Gastrocnemius medialis (tissue), 4 donors: ENCODE measurements at regions of chr19 and their contacts with region 1.

Region 1: GRCh38 chr19:29212648-29213573 is at the start of gene UQCRFS1:
- DNase-seq: peak; percentile 90 to 94
- ATAC-seq: peak; percentile 93 to 97
- H3K4me3 ChIP-seq: peak within 1 kb of the TSS; percentile 70 to 84 (median 70)
- H3K27ac ChIP-seq: peak within 1 kb of the TSS; percentile 88 to 94 (median 92)
- H3K4me1 ChIP-seq: peaks cover 29 to 31% of the 10 kb centered on the region in 2 donors
- H3K27me3 ChIP-seq: no peaks in the 10 kb centered on the region
- CTCF ChIP-seq: no peak
- POLR2A ChIP-seq: peak; percentile 96 to 97
- total RNA-seq, gene UQCRFS1: 78.1 to 142 (median 106) TPM

Region 2: GRCh38 chr19:27793644-27794493 is 1419.0 kb before region 1 on chr19:
- in situ Hi-C with region 1: no loop called
- intact Hi-C with region 1: loop called (anchors 5 kb)
- DNase-seq: peak; percentile 92 to 94
- ATAC-seq: peak; percentile 90 to 95
- H3K4me3 ChIP-seq: peak overlapping the region; percentile 72 to 96 (median 84)
- H3K27ac ChIP-seq: peak overlapping the region; percentile 87 to 97 (median 94)
- H3K4me1 ChIP-seq: peaks cover 28 to 31% of the 10 kb centered on the region in 2 donors
- H3K27me3 ChIP-seq: no peaks in the 10 kb centered on the region
- CTCF ChIP-seq: peak in 1 of 5 experiments; percentile 26
- POLR2A ChIP-seq: peak; percentile 77 to 79

Region 3: GRCh38 chr19:29247872-29248271 is 35.0 kb after region 1 on chr19:
- in situ Hi-C with region 1: no loop called
- intact Hi-C with region 1: loop called (anchors 5 kb)
- DNase-seq: peak in 1 of 2 donors; percentile 13
- ATAC-seq: peak; percentile 54 to 64
- H3K4me3 ChIP-seq: peak overlapping the region in 1 of 4 donors; percentile 13
- H3K27ac ChIP-seq: peak overlapping the region in 1 of 4 donors; percentile 37
- H3K4me1 ChIP-seq: peaks cover 10 to 21% of the 10 kb centered on the region in 2 donors
- H3K27me3 ChIP-seq: no peaks in the 10 kb centered on the region
- CTCF ChIP-seq: no peak
- POLR2A ChIP-seq: no peak

Region 4: DNA sequence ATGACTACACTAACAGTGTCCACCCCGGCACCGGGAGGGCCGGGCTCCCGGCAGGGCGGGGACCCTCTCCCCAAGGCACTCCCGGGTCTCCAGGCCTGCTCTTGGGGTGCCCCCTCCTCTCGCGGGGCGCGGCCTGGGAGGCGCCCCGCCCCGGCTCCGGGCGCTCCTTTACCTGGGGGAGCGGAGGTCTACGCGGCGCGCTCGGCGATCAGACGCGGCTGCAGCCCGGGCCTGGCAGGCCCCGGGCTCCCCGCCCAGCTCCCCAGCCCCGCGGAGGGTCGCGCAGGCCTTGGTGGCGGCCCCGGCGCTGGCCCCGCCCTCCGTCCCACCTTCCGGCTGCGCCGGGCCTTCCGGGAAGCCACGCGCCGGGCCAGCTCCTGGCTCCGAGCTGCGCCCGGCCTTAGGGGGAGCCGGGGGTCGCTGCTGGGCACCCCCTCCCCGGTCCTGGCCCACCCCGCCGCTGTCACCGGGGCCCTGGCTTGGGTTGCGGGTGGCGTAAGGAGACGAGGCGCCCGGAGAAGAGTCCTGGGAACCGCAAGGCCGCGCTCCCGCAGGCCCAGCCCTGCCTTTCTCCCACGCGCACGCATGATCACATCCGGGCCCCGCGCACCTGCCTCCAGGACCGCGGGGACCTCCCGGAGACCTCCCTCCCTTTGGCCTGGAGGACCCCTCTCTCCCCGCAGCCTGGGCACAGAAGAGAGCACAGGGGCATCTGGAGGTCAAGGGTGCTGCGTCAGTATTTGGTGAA is 502.2 kb after region 1 on chr19 and contains the start of gene C19orf12:
- in situ Hi-C with region 1: loop called in 1 of 4 experiments (anchors 25 kb)
- intact Hi-C with region 1: no loop called
- DNase-seq: peak in 1 of 2 donors; percentile 54
- ATAC-seq: peak; percentile 82 to 86
- H3K4me3 ChIP-seq: peak within 1 kb of the TSS; percentile 80 to 99 (median 86)
- H3K27ac ChIP-seq: peak within 1 kb of the TSS; percentile 94 to 98 (median 94)
- H3K4me1 ChIP-seq: peaks cover 24 to 26% of the 10 kb centered on the region in 2 donors
- H3K27me3 ChIP-seq: no peaks in the 10 kb centered on the region
- CTCF ChIP-seq: peak in 2 of 5 experiments; percentile 24 to 28
- POLR2A ChIP-seq: peak; percentile 92 to 94
- total RNA-seq, gene C19orf12: 54.4 to 142 (median 69.8) TPM